ENCODE measurements at regions of chr10 and their contacts with region 1.

Region 1: GRCh38 chr10:110007701-110008517 is at the start of gene ADD3:
- DNase-seq: peak; percentile 92
- H3K4me3 Mint-ChIP-seq: no peak within 1 kb of the TSS
- H3K27ac Mint-ChIP-seq: peak within 1 kb of the TSS; percentile 81
- H3K4me1 Mint-ChIP-seq: peaks cover 40% of the 10 kb centered on the region
- H3K27me3 Mint-ChIP-seq: no peaks in the 10 kb centered on the region
- total RNA-seq, gene ADD3: 92.3 to 93.3 TPM

Region 2: DNA sequence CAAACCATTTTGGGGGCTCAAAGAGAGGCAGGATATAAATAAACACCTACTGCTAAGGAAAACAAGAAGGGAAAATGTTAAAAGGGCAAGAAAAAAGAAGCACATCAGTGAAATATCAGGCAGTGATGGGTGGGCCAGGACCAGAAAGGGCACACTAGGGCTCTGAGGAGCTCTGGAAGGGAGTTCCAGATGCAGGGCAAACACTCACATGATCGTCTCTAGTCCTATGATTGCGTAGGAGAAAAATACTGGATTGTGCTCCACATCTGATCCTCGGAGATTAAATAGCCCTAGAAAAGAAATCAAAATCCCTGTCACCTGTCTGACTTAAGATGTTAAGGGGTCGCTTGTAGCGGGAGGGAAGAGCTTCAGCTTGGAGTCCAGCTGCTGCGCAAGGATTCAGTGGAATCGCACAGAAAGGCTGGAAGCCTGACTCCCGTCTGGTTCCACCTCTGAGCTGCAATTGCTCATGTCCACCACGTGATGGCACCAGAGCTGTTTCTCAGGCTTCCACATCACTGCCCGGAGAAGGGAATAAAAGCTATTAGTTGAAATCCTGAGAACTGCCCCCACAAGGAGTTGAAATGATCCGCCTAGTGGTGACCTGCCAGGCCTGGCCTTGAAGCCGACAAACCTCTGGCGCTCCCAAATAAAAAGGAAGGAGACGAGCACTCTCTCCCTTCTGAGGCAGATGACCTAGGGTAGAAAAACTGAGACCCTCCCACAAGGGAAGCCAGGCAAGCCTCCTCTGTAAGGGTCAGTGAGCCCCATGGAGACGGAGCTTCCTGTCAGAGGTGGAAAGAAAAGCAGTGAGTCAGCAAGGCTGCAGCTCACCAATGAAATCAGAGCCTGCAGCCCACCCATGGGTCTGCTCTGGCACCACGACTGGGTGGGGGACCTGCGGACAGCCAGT is 123.8 kb before region 1 on chr10:
- CTCF ChIA-PET with region 1: interaction called, 6 read pairs
- POLR2A ChIA-PET with region 1: no interaction called
- intact Hi-C with region 1: loop called (anchors 1 kb)
- DNase-seq: peak; percentile 70
- H3K4me3 Mint-ChIP-seq: no peak overlapping the region
- H3K27ac Mint-ChIP-seq: no peak overlapping the region
- H3K4me1 Mint-ChIP-seq: peaks cover 21% of the 10 kb centered on the region
- H3K27me3 Mint-ChIP-seq: no peaks in the 10 kb centered on the region

Region 3: DNA sequence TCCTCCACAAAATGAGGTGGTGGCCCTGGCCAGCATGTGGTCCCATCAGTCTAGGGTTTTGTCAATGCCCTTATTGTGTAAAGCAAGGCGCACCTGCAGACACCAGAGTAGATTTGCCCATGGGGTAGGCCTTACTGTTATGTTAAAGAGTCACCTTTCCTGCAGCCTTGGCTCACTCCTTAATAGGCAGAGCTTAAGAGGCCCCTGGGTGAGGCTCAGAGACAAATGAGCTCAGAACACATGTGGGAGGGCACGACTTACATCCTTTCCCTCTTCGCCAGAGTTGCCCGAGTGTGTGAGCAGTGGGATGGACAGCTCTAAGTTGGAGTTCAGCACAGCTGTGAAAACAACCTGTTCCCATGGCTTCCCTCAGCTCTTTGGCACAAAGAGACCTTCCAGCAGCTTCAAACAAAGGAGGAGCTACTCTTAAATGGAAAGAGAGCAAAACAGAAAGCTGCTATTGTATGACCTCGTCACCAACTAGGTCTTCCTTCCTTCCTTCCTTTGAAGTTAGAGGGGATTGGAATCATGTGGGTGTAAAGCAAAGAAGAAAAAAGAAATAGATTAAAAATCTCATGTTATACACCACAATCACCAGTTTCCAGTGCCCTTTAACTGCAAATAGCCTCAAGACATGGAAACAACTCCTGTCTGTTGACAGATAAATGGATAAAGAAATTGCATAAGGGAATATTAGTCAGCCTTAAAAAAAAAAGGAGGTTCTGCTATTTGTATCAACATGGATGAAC is 72.8 kb before region 1 on chr10:
- CTCF ChIA-PET with region 1: no interaction called
- POLR2A ChIA-PET with region 1: no interaction called
- intact Hi-C with region 1: loop called (anchors 2 kb)
- DNase-seq: peak; percentile 47
- H3K4me3 Mint-ChIP-seq: peak overlapping the region; percentile 74
- H3K27ac Mint-ChIP-seq: peak overlapping the region; percentile 87
- H3K4me1 Mint-ChIP-seq: peaks cover 66% of the 10 kb centered on the region
- H3K27me3 Mint-ChIP-seq: no peaks in the 10 kb centered on the region

Region 4: GRCh38 chr10:110036640-110037039 is 28.7 kb after region 1 on chr10:
- CTCF ChIA-PET with region 1: interaction called, 3 read pairs
- POLR2A ChIA-PET with region 1: interaction called, 5 read pairs
- intact Hi-C with region 1: loop called (anchors 1 kb)
- DNase-seq: no peak
- H3K4me3 Mint-ChIP-seq: no peak overlapping the region
- H3K27ac Mint-ChIP-seq: peak overlapping the region; percentile 54
- H3K4me1 Mint-ChIP-seq: peaks cover 83% of the 10 kb centered on the region
- H3K27me3 Mint-ChIP-seq: no peaks in the 10 kb centered on the region

Region 5: DNA sequence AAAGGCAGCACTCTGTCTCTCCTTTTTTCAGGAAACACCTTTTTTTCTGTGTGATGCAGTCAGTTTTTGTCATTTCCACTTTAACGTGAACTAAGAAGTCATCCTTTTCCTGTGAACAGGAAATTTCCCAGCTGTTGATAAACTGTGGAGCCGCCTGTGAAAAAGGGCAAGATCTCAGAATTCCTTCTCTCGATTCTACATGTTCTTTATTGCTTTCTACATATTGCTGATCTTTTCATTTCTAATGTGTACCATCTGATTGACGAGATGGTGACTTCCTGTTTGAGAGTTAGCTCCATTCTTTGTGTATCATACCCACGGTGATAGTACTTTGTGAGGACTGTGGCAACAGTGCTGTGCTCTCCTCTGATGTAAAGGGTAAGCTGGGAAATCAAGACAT is 50.3 kb after region 1 on chr10:
- CTCF ChIA-PET with region 1: interaction called, 4 read pairs
- POLR2A ChIA-PET with region 1: interaction called, 5 read pairs
- intact Hi-C with region 1: loop called (anchors 1 kb)
- DNase-seq: no peak
- H3K4me3 Mint-ChIP-seq: peak overlapping the region; percentile 68
- H3K27ac Mint-ChIP-seq: peak overlapping the region; percentile 83
- H3K4me1 Mint-ChIP-seq: peaks cover 83% of the 10 kb centered on the region
- H3K27me3 Mint-ChIP-seq: no peaks in the 10 kb centered on the region

Region 6: DNA sequence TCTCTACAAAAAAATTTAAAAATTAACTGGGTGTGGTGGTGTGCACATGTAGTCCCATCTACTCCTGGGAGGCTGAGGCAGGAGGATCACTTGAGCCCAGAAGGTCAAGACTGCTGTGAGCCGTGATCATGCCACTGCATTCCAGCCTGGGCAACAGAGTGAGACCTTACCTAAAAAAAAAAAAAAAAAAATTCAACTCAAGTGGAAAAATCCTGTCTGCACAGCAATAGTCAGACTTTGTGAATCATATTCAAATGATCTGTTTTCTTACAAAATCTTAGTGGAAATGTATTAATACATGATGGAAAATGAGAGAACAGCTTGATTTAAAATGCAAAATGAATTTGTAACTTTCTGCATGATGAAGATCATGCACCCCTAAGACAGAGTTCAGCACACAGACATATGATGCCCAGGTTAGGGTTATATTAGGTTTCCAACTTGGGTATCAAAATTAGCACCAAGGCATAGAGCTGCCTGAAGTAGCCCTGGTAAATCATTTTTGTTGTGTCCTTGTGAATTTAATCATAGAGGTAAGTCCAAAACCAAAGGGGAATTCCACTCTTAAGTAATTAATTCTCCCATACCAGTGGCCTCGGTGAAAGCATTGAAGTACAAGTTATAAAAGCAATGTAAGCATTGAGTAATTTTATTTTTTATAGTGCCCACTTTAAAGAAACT is 93.7 kb after region 1 on chr10:
- CTCF ChIA-PET with region 1: interaction called, 3 read pairs
- POLR2A ChIA-PET with region 1: no interaction called
- intact Hi-C with region 1: loop called (anchors 1 kb)
- DNase-seq: no peak
- H3K4me3 Mint-ChIP-seq: peak overlapping the region; percentile 29
- H3K27ac Mint-ChIP-seq: peak overlapping the region; percentile 91
- H3K4me1 Mint-ChIP-seq: peaks cover 69% of the 10 kb centered on the region
- H3K27me3 Mint-ChIP-seq: no peaks in the 10 kb centered on the region

Region 7: GRCh38 chr10:110225756-110226542 is 218.0 kb after region 1 on chr10:
- CTCF ChIA-PET with region 1: interaction called, 3 read pairs
- POLR2A ChIA-PET with region 1: interaction called, 3 read pairs
- intact Hi-C with region 1: loop called (anchors 5 kb)
- DNase-seq: peak; percentile 92
- H3K4me3 Mint-ChIP-seq: peak overlapping the region; percentile 98
- H3K27ac Mint-ChIP-seq: peak overlapping the region; percentile 96
- H3K4me1 Mint-ChIP-seq: peaks cover 41% of the 10 kb centered on the region
- H3K27me3 Mint-ChIP-seq: no peaks in the 10 kb centered on the region

Measured in activated CD4-positive, alpha-beta memory T cell treated with anti-CD3 and anti-CD28 coated beads for 36 hours (primary cell).